ENCODE measurements at regions of chr6 and their contacts with region 1.

Region 1: DNA sequence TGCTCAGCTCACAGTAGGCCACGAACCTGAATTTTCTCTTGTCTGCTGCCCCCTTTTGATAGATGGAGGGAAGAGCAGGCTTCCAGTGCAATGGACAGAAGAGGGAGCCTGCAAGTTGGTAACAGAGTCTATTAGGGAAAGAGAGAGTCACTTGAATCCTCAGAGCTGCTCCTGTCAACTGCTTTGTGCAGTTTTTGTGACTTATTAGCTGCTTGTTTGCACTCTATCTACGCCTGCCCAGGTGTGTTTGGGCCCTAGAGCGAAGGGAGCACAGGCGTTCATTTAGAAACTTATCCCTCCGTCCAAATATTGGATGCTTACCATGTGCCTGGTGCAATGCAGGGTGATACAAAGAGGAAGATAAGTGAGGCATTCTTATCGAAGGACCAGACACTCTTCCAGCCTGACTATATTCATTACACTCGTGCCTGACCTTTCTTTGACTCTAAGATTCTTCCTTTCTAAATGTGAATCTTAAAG is 11.6 kb upstream of the SLC2A12 start:
- DNase-seq: peak; percentile 70
- ATAC-seq: peak; percentile 92
- H3K4me3 Mint-ChIP-seq: no peak overlapping the region
- H3K27ac Mint-ChIP-seq: no peak overlapping the region
- H3K4me1 Mint-ChIP-seq: no peaks in the 10 kb centered on the region
- H3K27me3 Mint-ChIP-seq: peaks cover 1% of the 10 kb centered on the region

Region 2: DNA sequence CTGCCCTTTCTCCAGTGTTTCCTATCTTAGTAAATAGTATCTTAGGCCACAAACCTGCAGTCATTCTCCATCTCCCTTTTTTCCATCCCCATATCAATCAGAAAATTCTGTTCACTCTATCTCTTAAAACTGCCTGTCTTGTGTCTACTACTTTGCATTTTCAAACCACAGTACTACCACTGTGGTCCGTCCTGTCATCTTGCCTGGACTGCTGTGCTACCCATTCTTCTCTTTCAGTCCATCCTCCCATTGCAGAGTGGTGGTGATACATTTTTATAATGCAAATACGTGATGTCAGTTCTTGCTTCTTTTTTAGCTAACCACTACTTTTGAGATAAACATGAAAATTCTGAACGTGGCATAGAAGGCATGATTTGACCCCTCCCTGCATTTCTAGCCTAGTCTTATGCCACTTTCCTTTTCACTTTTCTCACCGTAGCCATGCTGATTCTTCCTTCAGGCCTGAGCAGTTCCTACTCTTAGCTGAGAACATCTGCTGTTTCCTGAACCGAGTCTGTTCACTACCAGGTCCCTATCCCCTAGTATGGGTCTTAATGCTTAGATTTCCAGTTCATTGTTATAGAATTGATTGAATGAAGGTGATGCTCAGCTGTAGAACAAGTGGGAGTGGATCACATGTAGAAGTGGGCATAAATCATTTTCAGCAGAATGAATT is 97.2 kb before region 1 on chr6:
- CTCF ChIA-PET with region 1: interaction called, 18 read pairs
- POLR2A ChIA-PET with region 1: no interaction called
- intact Hi-C with region 1: no loop called
- DNase-seq: no peak
- ATAC-seq: no peak
- H3K4me3 Mint-ChIP-seq: no peak overlapping the region
- H3K27ac Mint-ChIP-seq: no peak overlapping the region
- H3K4me1 Mint-ChIP-seq: peaks cover 59% of the 10 kb centered on the region
- H3K27me3 Mint-ChIP-seq: no peaks in the 10 kb centered on the region

Region 3: DNA sequence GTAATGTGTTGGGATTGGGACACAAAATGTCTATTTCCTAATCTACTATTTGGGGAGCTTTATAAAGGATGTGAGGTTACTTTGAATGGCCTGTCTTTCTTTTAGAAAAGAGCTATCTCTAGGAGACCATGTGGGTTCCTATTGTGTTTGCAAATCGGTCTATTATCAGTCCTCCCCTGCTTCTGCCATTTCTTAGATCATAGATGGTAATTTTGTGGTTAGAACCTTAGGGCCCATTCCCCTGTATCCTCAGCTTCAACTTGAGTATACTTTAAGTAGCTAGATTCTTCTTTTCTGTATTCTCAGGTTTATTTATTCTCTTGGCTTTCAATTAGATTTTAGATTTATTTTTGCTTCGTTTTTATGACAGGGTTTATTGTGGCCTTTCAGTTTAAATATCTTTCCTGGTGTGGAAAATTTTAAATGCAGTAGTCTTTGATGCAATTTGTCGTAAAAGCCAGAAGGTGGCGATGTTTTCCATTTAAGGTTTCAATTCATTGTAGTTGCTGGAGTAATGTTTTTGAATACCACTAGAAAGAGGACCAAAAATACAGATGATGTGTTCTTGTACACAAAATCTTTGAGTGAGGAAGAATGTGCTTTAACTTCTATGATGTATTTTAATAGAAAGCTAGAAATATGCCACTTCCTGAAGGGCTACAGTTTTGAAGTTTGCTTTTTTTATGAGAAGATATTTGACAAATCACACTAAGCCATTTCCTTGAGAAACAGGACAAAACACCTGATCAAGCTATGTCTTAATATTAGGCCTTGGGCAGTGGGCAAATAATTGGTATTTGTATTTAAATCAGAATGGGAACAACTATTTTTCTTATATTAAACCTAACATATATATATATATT is 90.7 kb before region 1 on chr6:
- CTCF ChIA-PET with region 1: interaction called, 79 read pairs
- POLR2A ChIA-PET with region 1: no interaction called
- intact Hi-C with region 1: loop called (anchors 1 kb)
- DNase-seq: no peak
- ATAC-seq: peak; percentile 61
- H3K4me3 Mint-ChIP-seq: no peak overlapping the region
- H3K27ac Mint-ChIP-seq: no peak overlapping the region
- H3K4me1 Mint-ChIP-seq: peaks cover 31% of the 10 kb centered on the region
- H3K27me3 Mint-ChIP-seq: no peaks in the 10 kb centered on the region

Region 4: GRCh38 chr6:134047673-134048072 is 16.3 kb before region 1 on chr6:
- CTCF ChIA-PET with region 1: interaction called, 44 read pairs
- POLR2A ChIA-PET with region 1: no interaction called
- intact Hi-C with region 1: no loop called
- DNase-seq: no peak
- ATAC-seq: no peak
- H3K4me3 Mint-ChIP-seq: no peak overlapping the region
- H3K27ac Mint-ChIP-seq: no peak overlapping the region
- H3K4me1 Mint-ChIP-seq: peaks cover 9% of the 10 kb centered on the region
- H3K27me3 Mint-ChIP-seq: peaks cover 6% of the 10 kb centered on the region

Region 5: DNA sequence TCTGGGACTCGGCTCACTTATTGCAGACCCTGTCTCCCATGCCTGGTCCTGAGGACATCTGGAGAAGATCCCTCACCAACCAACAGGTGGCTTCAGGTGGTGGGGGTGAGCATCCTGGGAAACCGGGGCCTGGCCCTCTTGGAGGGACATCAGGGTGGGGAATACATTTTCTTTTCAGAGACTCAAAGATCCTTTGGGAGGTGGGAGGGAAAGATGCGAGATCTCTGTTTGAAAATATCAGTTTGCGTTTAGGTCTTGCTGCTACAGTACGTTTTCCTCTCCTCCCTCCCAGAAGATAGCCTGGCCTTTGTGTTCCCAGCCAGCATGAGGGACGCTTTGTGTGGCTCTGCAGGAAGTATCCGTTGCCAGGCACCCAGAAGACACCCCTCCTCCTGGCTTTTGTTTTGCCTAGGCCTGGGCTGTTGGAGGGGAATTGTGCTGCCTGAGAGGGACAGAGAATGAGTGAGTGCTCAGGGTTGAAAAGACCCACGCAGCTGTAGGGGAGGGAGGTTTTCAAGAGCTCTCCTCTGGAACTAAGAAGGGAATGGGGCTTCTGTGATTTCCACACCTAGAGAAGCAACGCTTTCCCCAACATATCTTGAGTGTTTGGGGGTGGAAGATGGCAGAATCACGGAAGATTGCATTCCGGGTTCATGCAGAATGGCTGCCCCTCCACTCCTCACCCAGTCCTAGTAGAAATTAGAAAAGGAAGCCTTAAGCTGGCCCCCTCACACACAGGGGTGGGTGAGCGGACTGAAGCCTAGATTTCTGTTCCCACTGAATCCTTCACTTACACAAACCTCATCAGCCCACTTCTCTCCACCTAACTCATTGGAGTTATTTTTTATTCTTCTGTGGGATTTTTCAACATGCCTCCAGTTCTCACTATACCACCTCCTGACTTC is 10.4 kb after region 1 on chr6:
- CTCF ChIA-PET with region 1: interaction called, 10 read pairs
- POLR2A ChIA-PET with region 1: no interaction called
- intact Hi-C with region 1: no loop called
- DNase-seq: no peak
- ATAC-seq: no peak
- H3K4me3 Mint-ChIP-seq: no peak overlapping the region
- H3K27ac Mint-ChIP-seq: no peak overlapping the region
- H3K4me1 Mint-ChIP-seq: no peaks in the 10 kb centered on the region
- H3K27me3 Mint-ChIP-seq: no peaks in the 10 kb centered on the region

Region 6: GRCh38 chr6:134080171-134080795 is 16.3 kb after region 1 on chr6:
- CTCF ChIA-PET with region 1: interaction called, 10 read pairs
- POLR2A ChIA-PET with region 1: no interaction called
- intact Hi-C with region 1: no loop called
- DNase-seq: no peak
- ATAC-seq: no peak
- H3K4me3 Mint-ChIP-seq: no peak overlapping the region
- H3K27ac Mint-ChIP-seq: no peak overlapping the region
- H3K4me1 Mint-ChIP-seq: peaks cover 10% of the 10 kb centered on the region
- H3K27me3 Mint-ChIP-seq: no peaks in the 10 kb centered on the region

Measured in activated CD4-positive, alpha-beta T cell treated with anti-CD3 and anti-CD28 coated beads for 36 hours (primary cell).